K562 (cell line): ENCODE measurements at regions of chr4 and their contacts with region 1.

Region 1: DNA sequence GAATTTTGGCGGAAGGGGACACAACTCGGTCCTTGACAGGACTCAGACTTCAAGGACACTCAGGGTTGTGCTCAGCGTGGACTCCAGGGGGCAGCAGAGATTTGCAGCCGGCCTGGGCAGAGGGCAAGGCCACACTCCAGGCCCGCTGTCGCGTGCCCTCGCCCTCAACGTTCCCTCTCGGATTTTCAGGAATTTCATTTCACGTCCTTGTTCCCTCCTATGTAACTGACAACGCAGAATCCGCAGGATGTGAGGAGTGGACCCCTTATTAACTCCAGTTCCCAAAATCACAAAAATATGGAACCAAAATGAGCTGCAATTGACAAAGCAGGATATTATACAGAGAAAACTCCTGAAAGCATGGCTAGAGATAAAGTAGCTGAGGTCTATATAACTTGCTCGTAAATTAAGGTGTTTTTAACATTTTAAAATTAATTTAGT is 21.0 kb upstream of the DCTD start:
- DNase-seq: peak; percentile 63 to 79 (median 72)
- ATAC-seq: peak; percentile 100
- H3K4me3 ChIP-seq: no peak overlapping the region
- H3K27ac ChIP-seq: no peak overlapping the region
- H3K4me1 ChIP-seq: peaks cover 0 to 3% of the 10 kb centered on the region in 2 experiments; a peak in 1 of 5 replicates
- H3K27me3 ChIP-seq: peaks cover 0 to 6% of the 10 kb centered on the region in 2 experiments; a peak in 1 of 5 replicates
- CTCF ChIP-seq: peak; percentile 93 to 94 (median 93)
- EP300 ChIP-seq: no peak
- POLR2A ChIP-seq: no peak
- RAD21 ChIP-seq: peak; percentile 97

Region 2: GRCh38 chr4:182843808-182844325 is 94.4 kb before region 1 on chr4:
- CTCF ChIA-PET with region 1: no interaction called
- POLR2A ChIA-PET with region 1: no interaction called
- in situ Hi-C with region 1: no loop called
- intact Hi-C with region 1: no loop called
- DNase-seq: no peak
- ATAC-seq: no peak
- H3K4me3 ChIP-seq: no peak overlapping the region
- H3K27ac ChIP-seq: no peak overlapping the region
- H3K4me1 ChIP-seq: no peaks in the 10 kb centered on the region; a peak in 1 of 5 replicates
- H3K27me3 ChIP-seq: peaks cover 28 to 90% of the 10 kb centered on the region in 2 experiments
- CTCF ChIP-seq: no peak
- EP300 ChIP-seq: no peak
- POLR2A ChIP-seq: no peak
- RAD21 ChIP-seq: no peak

Region 3: DNA sequence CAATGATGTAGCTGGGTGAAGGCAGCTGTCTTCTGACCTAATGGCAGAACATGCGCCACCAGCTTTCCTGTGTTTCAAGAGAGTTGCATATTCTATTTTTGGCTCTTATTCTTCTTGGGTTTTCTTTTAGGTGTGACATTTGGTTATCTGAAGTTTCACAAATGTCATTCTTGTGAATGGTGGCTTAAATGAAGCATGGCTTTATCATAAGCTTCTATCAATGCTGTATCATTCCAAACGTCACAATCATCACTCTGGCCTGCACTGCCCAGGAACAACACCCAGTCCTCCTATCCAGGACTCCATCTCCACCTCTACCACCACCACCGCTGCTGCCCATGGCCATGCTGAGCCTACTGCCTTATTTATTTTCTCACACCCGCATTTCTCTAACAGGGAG is 91.2 kb after region 1 on chr4:
- CTCF ChIA-PET with region 1: no interaction called
- POLR2A ChIA-PET with region 1: no interaction called
- in situ Hi-C with region 1: no loop called
- intact Hi-C with region 1: loop called (anchors 5 kb)
- DNase-seq: no peak
- ATAC-seq: no peak; the same call in 2 of the 3 replicates
- H3K4me3 ChIP-seq: no peak overlapping the region
- H3K27ac ChIP-seq: peak overlapping the region; percentile 4; the same call in 1 of the 3 replicates
- H3K4me1 ChIP-seq: peaks cover 11 to 34% of the 10 kb centered on the region in 2 experiments; a peak in 3 of 5 replicates
- H3K27me3 ChIP-seq: no peaks in the 10 kb centered on the region
- CTCF ChIP-seq: no peak
- EP300 ChIP-seq: peak; percentile 24; the same call in 1 of the 2 replicates
- POLR2A ChIP-seq: no peak
- RAD21 ChIP-seq: no peak

Region 4: GRCh38 chr4:183142571-183143550 is 204.6 kb after region 1 on chr4:
- CTCF ChIA-PET with region 1: no interaction called
- POLR2A ChIA-PET with region 1: no interaction called
- in situ Hi-C with region 1: no loop called
- intact Hi-C with region 1: loop called (anchors 5 kb)
- DNase-seq: no peak
- ATAC-seq: peak; percentile 33; the same call in 2 of the 3 replicates
- H3K4me3 ChIP-seq: no peak overlapping the region
- H3K27ac ChIP-seq: no peak overlapping the region
- H3K4me1 ChIP-seq: peaks cover 0 to 34% of the 10 kb centered on the region in 2 experiments; a peak in 4 of 5 replicates
- H3K27me3 ChIP-seq: no peaks in the 10 kb centered on the region
- CTCF ChIP-seq: no peak
- EP300 ChIP-seq: no peak
- POLR2A ChIP-seq: no peak
- RAD21 ChIP-seq: no peak

Region 5: GRCh38 chr4:183256756-183257385 is 318.6 kb after region 1 on chr4:
- CTCF ChIA-PET with region 1: interaction called, 44 read pairs
- POLR2A ChIA-PET with region 1: interaction called, 4 read pairs
- in situ Hi-C with region 1: loop called (anchors 5 kb)
- intact Hi-C with region 1: loop called (anchors 1 kb)
- DNase-seq: peak; percentile 69 to 70 (median 70)
- ATAC-seq: peak; percentile 98
- H3K4me3 ChIP-seq: no peak overlapping the region
- H3K27ac ChIP-seq: no peak overlapping the region
- H3K4me1 ChIP-seq: no peaks in the 10 kb centered on the region; a peak in 1 of 5 replicates
- H3K27me3 ChIP-seq: no peaks in the 10 kb centered on the region
- CTCF ChIP-seq: peak; percentile 61 to 84 (median 78)
- EP300 ChIP-seq: no peak
- POLR2A ChIP-seq: no peak
- RAD21 ChIP-seq: peak; percentile 27 to 61; a peak in 3 of 4 replicates